IMR-90 (cell line): ENCODE measurements at regions of chr22 and their contacts with region 1.

Region 1: DNA sequence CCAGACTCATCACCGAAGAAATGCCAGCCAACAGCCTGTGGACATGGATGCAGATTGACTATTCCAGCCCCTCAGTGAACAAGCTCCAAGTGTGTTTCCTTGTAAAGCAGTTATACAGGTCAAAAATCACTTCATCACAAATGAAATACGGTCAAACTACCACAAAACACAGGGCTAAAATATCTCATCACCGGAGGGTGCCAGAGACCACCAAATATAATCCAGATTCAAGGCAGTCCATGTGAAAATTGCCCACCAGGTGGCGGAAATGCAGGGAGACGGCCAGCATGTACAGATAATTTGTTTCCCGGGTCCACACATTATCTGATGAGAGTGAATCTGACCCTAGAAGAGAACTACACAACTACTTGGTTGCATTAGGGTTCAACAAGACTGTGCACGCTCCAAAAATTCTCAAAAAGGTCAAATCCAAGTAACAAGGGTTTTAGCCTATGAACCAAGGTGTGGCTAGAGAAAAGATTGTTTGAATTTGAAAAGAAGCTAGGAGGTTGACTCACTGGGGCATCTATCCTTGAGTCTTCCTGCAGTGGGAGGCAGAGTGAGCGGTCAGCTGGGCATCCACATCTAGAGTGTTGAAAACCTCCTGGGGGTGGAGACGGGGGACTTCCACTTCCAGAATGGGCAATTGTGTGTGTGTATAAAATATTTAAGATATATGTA is 71.7 kb downstream of the IGLL5 start:
- DNase-seq: peak; percentile 66
- ATAC-seq: peak; percentile 73
- H3K4me3 ChIP-seq: no peak overlapping the region
- H3K27ac ChIP-seq: no peak overlapping the region
- H3K4me1 ChIP-seq: no peaks in the 10 kb centered on the region
- H3K27me3 ChIP-seq: peaks cover 3% of the 10 kb centered on the region
- CTCF ChIP-seq: peak; percentile 99
- POLR2A ChIP-seq: no peak
- RAD21 ChIP-seq: peak; percentile 91

Region 2: DNA sequence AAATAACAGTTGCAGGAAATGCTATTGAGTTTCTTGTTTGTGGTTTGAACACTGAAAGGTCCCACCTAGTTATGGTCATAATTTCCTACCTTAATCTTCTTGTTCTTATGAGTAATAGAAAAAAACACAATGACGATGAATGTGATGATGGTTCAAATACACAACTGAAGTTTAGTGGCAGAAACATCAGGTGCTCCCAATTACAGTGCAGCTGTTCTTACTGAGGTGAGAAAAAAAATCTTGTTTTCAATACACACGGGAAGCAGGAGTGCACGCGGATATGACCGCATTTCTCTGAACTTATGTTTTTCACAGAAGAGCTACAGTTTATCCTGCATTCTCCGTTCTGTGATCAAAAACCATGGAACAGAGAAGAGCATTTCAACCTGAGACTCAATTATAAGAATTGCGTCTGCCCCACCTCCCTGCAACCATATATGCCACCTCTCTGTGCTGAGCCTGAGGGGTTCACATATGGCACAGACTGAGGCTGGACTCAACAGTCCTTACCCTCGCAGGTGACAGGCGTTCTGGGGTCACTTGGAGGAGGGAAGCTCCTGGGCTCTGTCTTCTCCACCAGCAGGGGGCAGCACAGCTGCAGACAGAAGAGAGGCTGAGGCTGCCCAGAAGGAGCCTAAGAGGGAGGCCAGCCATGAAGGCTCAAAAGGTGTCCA is 171.4 kb before region 1 on chr22:
- CTCF ChIA-PET with region 1: interaction called, 3 read pairs
- POLR2A ChIA-PET with region 1: no interaction called
- dilution Hi-C with region 1: no loop called
- in situ Hi-C with region 1: no loop called
- intact Hi-C with region 1: loop called (anchors 10 kb)
- DNase-seq: peak; percentile 28
- ATAC-seq: peak; percentile 67
- H3K4me3 ChIP-seq: no peak overlapping the region
- H3K27ac ChIP-seq: no peak overlapping the region
- H3K4me1 ChIP-seq: no peaks in the 10 kb centered on the region
- H3K27me3 ChIP-seq: 0 out of 2 replicates have a peak, but pooled peaks cover 2% of the 10 kb centered on the region
- CTCF ChIP-seq: peak; percentile 53
- POLR2A ChIP-seq: no peak
- RAD21 ChIP-seq: peak; percentile 37

Region 3: GRCh38 chr22:22848364-22848866 is 110.9 kb before region 1 on chr22:
- CTCF ChIA-PET with region 1: no interaction called
- POLR2A ChIA-PET with region 1: no interaction called
- dilution Hi-C with region 1: no loop called
- in situ Hi-C with region 1: no loop called
- intact Hi-C with region 1: loop called (anchors 1 kb)
- DNase-seq: peak; percentile 31
- ATAC-seq: peak; percentile 86
- H3K4me3 ChIP-seq: no peak overlapping the region
- H3K27ac ChIP-seq: no peak overlapping the region
- H3K4me1 ChIP-seq: no peaks in the 10 kb centered on the region
- H3K27me3 ChIP-seq: peaks cover 1% of the 10 kb centered on the region
- CTCF ChIP-seq: peak; percentile 64
- POLR2A ChIP-seq: no peak
- RAD21 ChIP-seq: peak; percentile 62

Region 4: DNA sequence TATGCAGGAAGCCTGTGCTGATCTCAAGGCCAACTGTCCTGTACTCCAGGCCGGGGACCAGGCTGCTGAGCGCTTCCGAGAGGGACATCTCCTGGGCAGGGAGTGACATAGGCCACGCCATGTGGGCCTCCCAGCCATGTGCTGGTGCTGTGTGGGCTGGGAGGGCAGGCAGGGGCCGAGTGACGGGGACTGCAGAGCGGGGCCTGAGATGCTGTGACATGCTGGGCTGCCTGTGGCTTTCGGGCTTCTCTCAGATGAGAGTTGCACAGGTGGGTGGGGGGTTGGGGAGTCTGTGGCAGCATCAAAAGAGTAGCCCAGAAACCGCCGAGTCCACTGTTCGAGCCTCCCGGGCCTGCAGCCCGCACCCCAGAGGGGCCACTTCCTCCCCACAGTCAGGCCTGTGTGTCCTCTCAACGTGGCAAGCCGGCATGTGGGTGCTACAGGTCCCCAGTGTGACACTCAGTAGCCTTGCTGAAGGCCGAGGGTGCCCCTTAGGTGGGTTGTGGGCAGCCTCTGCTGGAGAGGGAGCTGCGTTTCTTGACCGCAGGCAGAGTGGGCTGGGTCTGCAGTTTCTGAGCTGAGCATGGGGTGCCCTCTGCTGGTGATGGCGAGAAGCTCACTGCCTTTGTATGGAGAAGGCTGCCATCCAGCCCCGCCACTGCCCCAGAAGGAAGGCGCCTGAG is 322.3 kb after region 1 on chr22:
- CTCF ChIA-PET with region 1: no interaction called
- POLR2A ChIA-PET with region 1: no interaction called
- dilution Hi-C with region 1: no loop called
- in situ Hi-C with region 1: loop called (anchors 25 kb)
- intact Hi-C with region 1: loop called (anchors 5 kb)
- DNase-seq: peak; percentile 67
- ATAC-seq: peak; percentile 95
- H3K4me3 ChIP-seq: no peak overlapping the region
- H3K27ac ChIP-seq: no peak overlapping the region; the same call in 1 of the 2 replicates
- H3K4me1 ChIP-seq: peaks cover 5% of the 10 kb centered on the region; the same call in 1 of the 2 replicates
- H3K27me3 ChIP-seq: no peaks in the 10 kb centered on the region
- CTCF ChIP-seq: peak; percentile 95
- POLR2A ChIP-seq: 0 out of 2 replicates have a peak, but pooled peaks have one; percentile 50
- RAD21 ChIP-seq: peak; percentile 96